Gastrocnemius medialis (tissue), 4 donors: ENCODE measurements at regions of chr18 and their contacts with region 1.

Region 1: GRCh38 chr18:57621246-57621604 is 411 bp downstream of the NARS1 start:
- DNase-seq: peak in 1 of 2 donors; percentile 3
- ATAC-seq: peak; percentile 22 to 39
- H3K4me3 ChIP-seq: peak overlapping the region; percentile 73 to 99 (median 91)
- H3K27ac ChIP-seq: peak overlapping the region; percentile 88 to 99 (median 94)
- H3K4me1 ChIP-seq: peaks cover 16 to 20% of the 10 kb centered on the region in 2 donors
- H3K27me3 ChIP-seq: no peaks in the 10 kb centered on the region
- CTCF ChIP-seq: no peak
- POLR2A ChIP-seq: no peak

Region 2: DNA sequence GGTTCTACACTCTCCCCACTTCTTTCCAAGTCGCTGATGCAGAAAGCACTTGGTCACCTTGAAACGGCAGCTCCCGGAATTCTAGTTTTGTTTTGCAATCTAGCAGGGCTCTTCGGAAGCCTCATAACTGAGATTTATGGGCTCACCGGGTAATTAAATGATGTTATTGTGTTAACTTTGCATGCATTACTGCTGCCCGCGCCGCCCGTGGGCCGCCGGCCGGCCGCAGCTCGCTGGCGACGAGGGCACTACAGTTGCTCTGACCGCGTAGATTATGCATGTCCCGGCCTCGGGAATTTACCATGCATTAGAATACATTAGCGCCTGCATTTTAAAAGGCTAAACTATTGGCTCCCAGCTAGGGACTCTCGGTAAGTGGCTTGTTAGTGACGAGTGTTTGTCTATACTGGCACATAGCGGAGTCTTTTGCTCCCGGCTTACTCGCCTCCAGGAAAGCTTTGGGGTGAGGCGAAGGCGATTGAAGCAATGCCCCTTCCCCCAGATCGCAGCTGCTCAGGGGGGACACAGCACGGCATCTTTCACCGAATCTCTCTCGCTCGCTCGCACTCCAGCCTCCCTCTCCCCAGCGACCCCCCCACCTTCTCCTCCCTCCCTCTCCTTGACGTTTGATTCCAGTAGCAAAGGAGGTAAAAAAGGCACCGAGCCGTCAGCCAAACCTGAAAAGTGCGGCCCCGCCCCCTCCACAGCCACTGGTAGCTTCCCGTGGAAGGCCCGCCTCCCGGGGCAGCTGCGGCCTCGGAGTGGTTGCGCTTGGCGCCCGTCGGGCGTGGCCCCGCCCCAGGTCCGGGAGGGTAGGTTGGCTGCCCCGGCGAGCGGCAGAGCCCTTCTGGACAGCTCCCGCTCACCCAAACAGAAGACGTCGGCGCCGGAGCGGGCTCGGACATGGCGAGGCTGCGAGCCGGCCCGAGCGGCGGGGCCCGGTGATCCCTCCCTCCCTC is 186.4 kb before region 1 on chr18 and contains the start of gene ONECUT2:
- in situ Hi-C with region 1: no loop called
- intact Hi-C with region 1: loop called (anchors 5 kb)
- DNase-seq: peak; percentile 53 to 84
- ATAC-seq: peak; percentile 89 to 90
- H3K4me3 ChIP-seq: peak within 1 kb of the TSS; percentile 44 to 54 (median 54)
- H3K27ac ChIP-seq: no peak within 1 kb of the TSS
- H3K4me1 ChIP-seq: peaks cover 31 to 42% of the 10 kb centered on the region in 2 donors
- H3K27me3 ChIP-seq: peaks cover 89 to 94% (median 92%) of the 10 kb centered on the region in 3 donors
- CTCF ChIP-seq: no peak
- POLR2A ChIP-seq: no peak
- total RNA-seq, gene ONECUT2: under 0.01 to 0.15 (median 0.04) TPM in 3 of 4 donors, not detected in the other

Region 3: GRCh38 chr18:57574866-57575265 is 46.4 kb before region 1 on chr18:
- in situ Hi-C with region 1: no loop called
- intact Hi-C with region 1: no loop called
- DNase-seq: no peak
- ATAC-seq: no peak
- H3K4me3 ChIP-seq: no peak overlapping the region
- H3K27ac ChIP-seq: no peak overlapping the region
- H3K4me1 ChIP-seq: no peaks in the 10 kb centered on the region
- H3K27me3 ChIP-seq: no peaks in the 10 kb centered on the region
- CTCF ChIP-seq: no peak
- POLR2A ChIP-seq: no peak

Region 4: GRCh38 chr18:57586251-57587049 is 34.8 kb before region 1 on chr18 and contains the start of gene FECH:
- in situ Hi-C with region 1: no loop called
- intact Hi-C with region 1: loop called (anchors 2 kb)
- DNase-seq: peak; percentile 66 to 81
- ATAC-seq: peak; percentile 88 to 89
- H3K4me3 ChIP-seq: peak within 1 kb of the TSS; percentile 70 to 98 (median 90)
- H3K27ac ChIP-seq: peak within 1 kb of the TSS; percentile 74 to 94 (median 90)
- H3K4me1 ChIP-seq: peaks cover 10 to 13% of the 10 kb centered on the region in 2 donors
- H3K27me3 ChIP-seq: no peaks in the 10 kb centered on the region
- CTCF ChIP-seq: peak in 1 of 5 experiments; percentile 27
- POLR2A ChIP-seq: peak; percentile 75 to 82
- total RNA-seq, gene FECH: 60.8 to 78.4 (median 70.2) TPM

Region 5: GRCh38 chr18:57768537-57769326 is 147.5 kb after region 1 on chr18:
- in situ Hi-C with region 1: no loop called
- intact Hi-C with region 1: loop called (anchors 10 kb)
- DNase-seq: peak; percentile 38 to 58
- ATAC-seq: peak; percentile 75
- H3K4me3 ChIP-seq: no peak overlapping the region
- H3K27ac ChIP-seq: peak overlapping the region; percentile 80 to 88 (median 83)
- H3K4me1 ChIP-seq: peaks cover 44 to 72% of the 10 kb centered on the region in 2 donors
- H3K27me3 ChIP-seq: no peaks in the 10 kb centered on the region
- CTCF ChIP-seq: no peak
- POLR2A ChIP-seq: no peak

Region 6: DNA sequence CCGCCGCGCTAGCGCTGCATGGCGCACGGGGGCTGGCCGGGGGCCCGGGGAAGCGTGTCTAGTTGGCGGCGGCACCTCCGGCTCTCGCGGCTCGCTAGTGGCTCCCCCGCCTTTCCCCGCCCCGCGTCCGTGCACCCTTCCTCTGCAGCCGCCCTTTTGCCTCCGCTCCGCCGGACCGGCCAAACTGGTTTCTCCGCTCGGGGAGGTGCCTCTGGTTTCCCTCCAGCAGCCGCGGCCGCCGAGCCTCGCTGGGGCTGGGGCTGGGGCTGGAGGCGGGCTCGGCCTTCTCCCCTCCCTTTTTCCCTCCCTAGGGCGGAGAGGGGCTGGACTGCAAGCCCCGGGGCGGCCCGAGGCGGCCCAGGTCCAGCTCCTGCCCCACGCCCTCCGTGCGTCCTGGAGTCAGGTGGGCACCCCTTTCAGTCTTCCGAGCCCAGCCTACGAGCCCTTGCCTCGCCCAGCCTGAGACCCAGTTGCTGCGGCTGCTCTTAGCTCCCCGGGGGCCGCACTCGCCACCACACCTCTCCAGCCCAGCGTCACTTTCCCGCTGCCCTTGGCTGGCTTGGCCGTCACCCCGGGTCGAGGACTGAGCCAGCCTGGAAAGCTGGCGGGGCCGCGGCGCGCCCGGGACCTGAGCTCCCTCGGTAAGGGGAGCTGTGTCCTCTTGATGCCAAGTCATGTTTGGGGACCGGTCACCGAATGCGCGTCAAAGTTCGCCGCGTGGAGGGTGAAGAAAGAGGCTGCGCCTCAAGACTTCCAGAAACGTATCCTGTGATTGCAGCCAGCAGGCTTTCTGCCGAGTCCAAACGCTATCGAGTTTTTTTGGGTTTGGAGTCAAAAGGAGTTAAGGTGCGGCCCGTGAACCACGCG is 182.1 kb after region 1 on chr18 and contains the start of gene ATP8B1:
- in situ Hi-C with region 1: loop called in 1 of 4 experiments (anchors 25 kb)
- intact Hi-C with region 1: loop called (anchors 5 kb)
- DNase-seq: peak; percentile 33 to 45
- ATAC-seq: peak; percentile 68 to 78
- H3K4me3 ChIP-seq: peak within 1 kb of the TSS; percentile 65 to 80 (median 72)
- H3K27ac ChIP-seq: peak within 1 kb of the TSS; percentile 66 to 85 (median 83)
- H3K4me1 ChIP-seq: peaks cover 12 to 38% of the 10 kb centered on the region in 2 donors
- H3K27me3 ChIP-seq: no peaks in the 10 kb centered on the region
- CTCF ChIP-seq: no peak
- POLR2A ChIP-seq: peak; percentile 45 to 57
- total RNA-seq, gene ATP8B1: 1.6 to 4.2 (median 2.6) TPM

Region 7: GRCh38 chr18:57833443-57834101 is 212.3 kb after region 1 on chr18:
- in situ Hi-C with region 1: no loop called
- intact Hi-C with region 1: no loop called
- DNase-seq: no peak
- ATAC-seq: no peak
- H3K4me3 ChIP-seq: no peak overlapping the region
- H3K27ac ChIP-seq: no peak overlapping the region
- H3K4me1 ChIP-seq: no peaks in the 10 kb centered on the region
- H3K27me3 ChIP-seq: no peaks in the 10 kb centered on the region
- CTCF ChIP-seq: no peak
- POLR2A ChIP-seq: no peak

Region 8: DNA sequence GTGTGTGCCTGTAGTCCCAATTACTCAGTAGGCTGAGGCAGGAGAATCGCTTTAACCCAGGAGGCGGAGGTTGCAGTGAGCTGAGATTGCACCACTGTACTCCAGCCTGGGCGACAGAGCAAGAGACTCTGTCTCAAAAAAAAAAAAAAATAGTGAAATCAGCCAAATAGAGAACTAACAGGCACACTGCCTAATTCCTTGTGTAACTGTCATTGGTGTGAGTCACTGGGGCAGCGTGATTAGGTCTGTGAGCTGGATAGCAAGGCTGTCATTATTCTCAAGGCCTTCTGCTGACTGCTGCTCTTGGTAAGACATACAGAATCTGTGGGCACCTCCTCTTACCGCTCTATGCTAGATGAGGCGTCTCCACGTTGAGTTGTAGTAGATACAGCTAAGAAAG is 693.1 kb after region 1 on chr18:
- in situ Hi-C with region 1: no loop called
- intact Hi-C with region 1: loop called (anchors 10 kb)
- DNase-seq: peak; percentile 82 to 85
- ATAC-seq: peak; percentile 79 to 81
- H3K4me3 ChIP-seq: peak overlapping the region in 1 of 4 donors; percentile 13
- H3K27ac ChIP-seq: peak overlapping the region; percentile 77 to 91 (median 80)
- H3K4me1 ChIP-seq: peaks cover 73 to 81% of the 10 kb centered on the region in 2 donors
- H3K27me3 ChIP-seq: no peaks in the 10 kb centered on the region
- CTCF ChIP-seq: no peak
- POLR2A ChIP-seq: peak; percentile 53 to 59

Region 9: DNA sequence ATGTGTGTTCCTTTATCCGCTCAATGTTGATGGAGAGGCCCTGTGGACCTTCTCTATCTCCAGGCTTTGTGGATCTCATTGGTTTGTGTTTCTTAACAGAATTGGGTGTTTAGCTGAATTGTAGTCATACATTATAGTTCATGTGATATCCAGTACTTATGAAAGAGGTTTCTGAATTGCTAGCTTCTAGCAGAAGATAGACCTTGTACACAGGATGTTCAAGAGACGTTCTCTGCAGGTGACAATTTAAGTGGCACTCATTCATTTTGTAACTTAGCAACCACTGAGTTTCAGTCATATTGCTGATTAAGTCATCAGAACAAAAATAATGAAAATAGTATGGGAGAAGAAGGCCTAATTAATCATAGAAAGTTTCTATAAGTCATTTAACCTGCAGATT is 728.4 kb after region 1 on chr18:
- in situ Hi-C with region 1: no loop called
- intact Hi-C with region 1: no loop called
- DNase-seq: no peak
- ATAC-seq: no peak
- H3K4me3 ChIP-seq: no peak overlapping the region
- H3K27ac ChIP-seq: no peak overlapping the region
- H3K4me1 ChIP-seq: peaks cover 8 to 13% of the 10 kb centered on the region in 2 donors
- H3K27me3 ChIP-seq: no peaks in the 10 kb centered on the region
- CTCF ChIP-seq: no peak
- POLR2A ChIP-seq: no peak